ENCODE measurements at regions of chr5 and their contacts with region 1.

Region 1: GRCh38 chr5:78648359-78649210 is at the start of gene LHFPL2:
- DNase-seq: peak in 40 of 42 donors; percentile 40 to 87 (median 70)

Region 2: GRCh38 chr5:78537821-78538220 is 110.8 kb before region 1 on chr5:
- intact Hi-C with region 1: loop called (anchors 10 kb)
- DNase-seq: peak in 32 of 42 donors; percentile 28 to 86 (median 60)

Region 3: DNA sequence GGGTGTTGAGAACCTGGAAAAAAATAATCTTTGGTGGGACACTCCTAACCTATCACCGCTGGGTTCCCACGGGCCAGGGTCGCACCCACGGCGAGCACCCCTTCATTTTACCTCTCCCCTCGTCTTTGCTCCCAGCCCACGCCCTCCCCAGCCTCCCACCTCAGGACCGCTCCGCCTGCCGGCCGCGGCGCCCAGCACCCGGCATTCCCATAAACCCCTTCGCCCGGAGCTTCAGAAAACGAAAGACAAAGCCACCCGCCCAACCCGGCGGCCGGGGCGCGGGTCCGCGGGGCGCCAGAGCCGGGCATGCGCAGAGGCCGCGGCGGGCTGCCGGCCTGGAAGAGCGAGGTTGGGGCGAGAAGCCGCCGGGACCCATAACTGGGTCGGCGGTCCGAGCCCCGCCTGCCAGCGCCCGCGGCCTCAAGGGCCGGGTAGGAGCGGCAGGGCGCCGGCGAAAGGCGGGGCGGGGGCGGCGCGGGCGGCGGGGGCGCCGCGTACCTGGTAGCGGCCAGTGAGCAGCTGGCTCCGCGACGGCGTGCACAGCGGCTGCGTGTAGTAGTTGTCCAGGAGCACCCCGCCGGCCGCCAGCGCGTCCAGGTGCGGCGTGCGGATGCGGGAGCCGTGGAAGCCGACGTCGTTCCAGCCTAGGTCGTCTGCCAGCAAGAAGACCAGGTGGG is 336.0 kb after region 1 on chr5:
- intact Hi-C with region 1: loop called (anchors 10 kb)
- DNase-seq: peak; percentile 74 to 95 (median 89)

Measured in head of caudate nucleus (tissue), 42 donors.